Right ventricle myocardium superior (tissue), 1 donor: ENCODE measurements at regions of chrX and their contacts with region 1.

Region 1: GRCh38 chrX:119145241-119145653 is 17.6 kb upstream of the KIAA1210 start:
- DNase-seq: no peak
- ATAC-seq: peak; percentile 66

Region 2: DNA sequence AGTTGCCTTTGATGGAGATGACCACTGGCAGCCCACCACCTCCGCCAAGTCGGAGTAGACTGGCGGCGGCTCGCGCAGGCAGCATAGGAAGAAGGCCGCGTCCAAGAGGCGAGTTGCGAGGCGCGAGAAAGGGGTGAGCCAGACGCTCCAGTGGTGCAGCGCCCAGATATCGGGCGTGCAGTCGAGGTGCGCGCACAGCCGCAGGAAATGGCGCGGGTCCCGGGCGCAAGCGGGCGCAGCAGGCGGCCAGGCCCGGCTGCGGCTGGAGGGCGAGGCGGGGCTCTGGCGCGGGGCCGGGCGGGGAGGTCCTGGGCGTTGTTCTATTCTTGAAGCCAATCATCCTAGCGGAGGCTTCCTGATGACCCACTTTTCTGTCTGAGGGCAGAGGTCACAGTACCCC is 77.7 kb after region 1 on chrX:
- intact Hi-C with region 1: loop called (anchors 5 kb)
- DNase-seq: no peak
- ATAC-seq: no peak

Region 3: DNA sequence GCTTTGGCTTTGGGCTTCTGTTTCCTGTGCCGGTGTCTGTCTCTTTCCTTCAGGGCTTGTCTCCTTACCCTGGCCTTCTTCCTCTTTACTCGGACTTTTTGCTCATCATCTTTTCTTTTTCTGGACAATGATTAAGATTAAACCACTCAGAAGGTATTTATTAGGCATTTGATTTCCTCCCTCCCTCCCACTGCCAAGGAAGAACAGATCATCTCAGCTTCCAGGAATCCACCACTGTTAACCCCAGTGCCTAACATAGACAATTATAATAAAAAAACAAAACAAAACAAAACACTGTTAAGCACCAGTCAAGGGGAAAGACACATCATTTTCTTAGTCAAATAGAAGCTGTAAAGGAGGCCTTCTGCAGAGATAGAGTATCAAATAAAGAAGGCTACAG is 107.5 kb after region 1 on chrX:
- intact Hi-C with region 1: no loop called
- DNase-seq: no peak
- ATAC-seq: no peak